Calu3 (cell line): ENCODE measurements at regions of chr2 and their contacts with region 1.

Region 1: GRCh38 chr2:145685323-145686050 is 1165.6 kb upstream of the ZEB2 start:
- DNase-seq: peak; percentile 50
- H3K4me3 Mint-ChIP-seq: peak overlapping the region; percentile 28
- H3K27ac Mint-ChIP-seq: peak overlapping the region; percentile 99
- H3K4me1 Mint-ChIP-seq: peaks cover 43% of the 10 kb centered on the region
- H3K27me3 Mint-ChIP-seq: no peaks in the 10 kb centered on the region
- CTCF ChIP-seq: no peak

Region 2: GRCh38 chr2:145431181-145431951 is 254.1 kb before region 1 on chr2:
- CTCF ChIA-PET with region 1: no interaction called
- intact Hi-C with region 1: loop called (anchors 2 kb)
- DNase-seq: peak; percentile 69
- H3K4me3 Mint-ChIP-seq: no peak overlapping the region
- H3K27ac Mint-ChIP-seq: no peak overlapping the region
- H3K4me1 Mint-ChIP-seq: peaks cover 14% of the 10 kb centered on the region
- H3K27me3 Mint-ChIP-seq: peaks cover 11% of the 10 kb centered on the region
- CTCF ChIP-seq: no peak